ENCODE measurements at regions of chr2 and their contacts with region 1.

Region 1: GRCh38 chr2:159286709-159287441 is 372 bp upstream of the WDSUB1 start:
- DNase-seq: peak; percentile 99
- ATAC-seq: peak; percentile 99
- H3K4me3 Mint-ChIP-seq: peak overlapping the region; percentile 84
- H3K27ac Mint-ChIP-seq: peak overlapping the region; percentile 83
- H3K4me1 Mint-ChIP-seq: peaks cover 29% of the 10 kb centered on the region
- H3K27me3 Mint-ChIP-seq: no peaks in the 10 kb centered on the region

Region 2: DNA sequence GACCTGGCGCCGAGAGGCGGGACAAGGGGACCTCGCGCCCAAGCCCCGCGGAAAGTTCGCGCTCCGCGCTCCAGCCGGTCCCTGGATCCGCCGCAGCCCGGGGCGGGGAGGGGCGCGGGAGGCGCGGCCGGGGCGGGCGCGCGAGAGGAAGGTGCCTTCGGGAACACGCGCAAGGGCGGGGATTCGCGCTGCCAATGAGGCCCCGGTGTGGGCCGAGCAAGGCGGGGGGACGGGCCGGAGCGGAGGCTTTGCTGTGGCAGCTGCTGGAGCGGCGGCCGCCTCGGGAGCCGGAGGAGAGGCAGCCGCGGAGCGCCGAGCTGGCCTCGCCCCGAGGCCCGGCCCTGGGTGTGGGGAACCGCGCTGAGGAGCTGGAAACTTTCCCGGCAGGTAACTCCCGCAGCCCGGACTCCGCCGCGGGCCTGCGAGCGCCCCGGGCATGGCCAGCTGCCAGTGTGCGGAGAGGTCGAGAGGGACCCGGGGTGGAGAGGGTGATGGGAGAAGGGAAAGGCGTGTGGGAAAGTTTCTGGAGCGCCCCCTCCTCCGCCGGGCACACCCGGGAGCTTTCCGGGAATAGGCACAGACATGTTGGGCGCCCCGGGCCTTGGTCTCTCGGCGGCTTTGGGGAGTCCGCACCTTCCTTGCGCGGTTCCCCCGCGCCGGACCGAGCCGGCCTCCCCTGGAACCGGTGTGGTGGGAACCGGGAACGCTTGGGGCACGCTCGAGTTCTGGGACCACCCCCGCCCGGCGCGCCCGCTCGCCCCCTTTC is 318.3 kb before region 1 on chr2 and contains the start of gene TANC1:
- CTCF ChIA-PET with region 1: no interaction called
- POLR2A ChIA-PET with region 1: no interaction called
- intact Hi-C with region 1: loop called in 1 of 2 experiments (anchors 5 kb)
- DNase-seq: peak; percentile 86
- ATAC-seq: peak; percentile 97
- H3K4me3 Mint-ChIP-seq: peak within 1 kb of the TSS; percentile 74
- H3K27ac Mint-ChIP-seq: no peak within 1 kb of the TSS
- H3K4me1 Mint-ChIP-seq: peaks cover 14% of the 10 kb centered on the region
- H3K27me3 Mint-ChIP-seq: peaks cover 36% of the 10 kb centered on the region
- total RNA-seq, gene TANC1: 0.89 to 1.1 TPM

Region 3: DNA sequence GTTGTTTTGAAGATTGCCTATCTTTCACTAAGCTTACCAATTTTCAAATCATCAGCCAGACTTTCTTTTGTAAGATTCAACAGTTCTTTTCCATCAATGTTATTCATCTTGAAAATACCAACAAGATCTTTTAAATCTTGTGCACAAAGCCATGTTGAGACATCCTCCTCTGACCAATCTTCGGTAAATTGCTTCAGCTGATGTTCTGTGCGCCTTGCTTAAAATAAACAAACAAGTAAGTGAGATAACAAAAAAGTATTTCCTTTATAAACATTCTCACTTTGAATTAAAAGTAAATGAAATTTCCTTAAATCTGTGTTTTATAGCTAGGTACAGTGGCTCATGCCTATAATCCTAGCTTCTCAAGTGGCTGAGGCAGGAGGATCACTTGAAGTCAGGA is 30.7 kb before region 1 on chr2:
- CTCF ChIA-PET with region 1: no interaction called
- POLR2A ChIA-PET with region 1: no interaction called
- intact Hi-C with region 1: no loop called
- DNase-seq: no peak
- ATAC-seq: no peak
- H3K4me3 Mint-ChIP-seq: no peak overlapping the region
- H3K27ac Mint-ChIP-seq: no peak overlapping the region
- H3K4me1 Mint-ChIP-seq: no peaks in the 10 kb centered on the region
- H3K27me3 Mint-ChIP-seq: no peaks in the 10 kb centered on the region

Measured in activated CD4-positive, alpha-beta T cell treated with anti-CD3 and anti-CD28 coated beads for 36 hours (primary cell).